Activated naive CD4-positive, alpha-beta T cell treated with anti-CD3 and anti-CD28 coated beads, Interleukin-2, amount 10 ng/mL, durations not matched to agents 7 days and 5 days (primary cell): ENCODE measurements at regions of chr7 and their contacts with region 1.

Region 1: DNA sequence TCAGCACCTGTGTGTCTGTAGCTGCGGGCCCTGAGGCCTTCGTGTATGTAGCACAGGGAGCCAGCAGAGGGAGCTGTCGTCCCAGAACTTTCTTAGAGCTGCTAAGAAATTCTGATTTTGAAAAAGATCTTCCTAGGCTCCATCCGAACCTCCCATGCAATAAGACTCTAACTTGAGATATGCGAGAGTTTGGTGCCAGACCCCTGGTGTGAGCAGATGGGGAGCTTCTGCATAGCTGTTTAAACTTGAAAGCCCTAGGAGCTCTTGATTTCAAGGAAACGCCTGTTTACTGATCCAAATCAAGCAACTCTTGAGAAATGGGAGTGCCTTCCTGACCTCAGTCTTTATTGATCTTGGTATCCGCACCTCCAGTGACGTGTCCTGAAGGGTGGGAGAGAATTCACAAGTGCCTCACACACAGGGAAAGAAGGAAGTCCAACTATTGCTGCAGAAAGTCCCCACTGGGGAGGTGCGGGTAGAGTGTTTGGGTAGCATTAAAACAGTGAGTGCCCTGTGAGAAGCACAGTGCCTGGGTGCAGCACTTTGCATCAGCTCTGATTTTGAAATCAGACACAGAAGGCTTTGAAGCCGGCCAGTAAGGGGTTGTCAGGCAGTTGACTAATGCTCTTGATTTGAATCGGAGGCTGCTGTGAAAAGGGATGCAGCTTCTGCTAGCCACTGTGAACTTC is 66.4 kb upstream of the STRIP2 start:
- DNase-seq: peak; percentile 87
- H3K4me3 Mint-ChIP-seq: peak overlapping the region; percentile 51
- H3K27ac Mint-ChIP-seq: peak overlapping the region; percentile 85
- H3K4me1 Mint-ChIP-seq: peaks cover 32% of the 10 kb centered on the region
- H3K27me3 Mint-ChIP-seq: no peaks in the 10 kb centered on the region

Region 2: GRCh38 chr7:129271500-129272355 is 96.1 kb before region 1 on chr7:
- CTCF ChIA-PET with region 1: no interaction called
- DNase-seq: peak; percentile 76
- H3K4me3 Mint-ChIP-seq: no peak overlapping the region
- H3K27ac Mint-ChIP-seq: no peak overlapping the region
- H3K4me1 Mint-ChIP-seq: peaks cover 2% of the 10 kb centered on the region
- H3K27me3 Mint-ChIP-seq: no peaks in the 10 kb centered on the region

Region 3: DNA sequence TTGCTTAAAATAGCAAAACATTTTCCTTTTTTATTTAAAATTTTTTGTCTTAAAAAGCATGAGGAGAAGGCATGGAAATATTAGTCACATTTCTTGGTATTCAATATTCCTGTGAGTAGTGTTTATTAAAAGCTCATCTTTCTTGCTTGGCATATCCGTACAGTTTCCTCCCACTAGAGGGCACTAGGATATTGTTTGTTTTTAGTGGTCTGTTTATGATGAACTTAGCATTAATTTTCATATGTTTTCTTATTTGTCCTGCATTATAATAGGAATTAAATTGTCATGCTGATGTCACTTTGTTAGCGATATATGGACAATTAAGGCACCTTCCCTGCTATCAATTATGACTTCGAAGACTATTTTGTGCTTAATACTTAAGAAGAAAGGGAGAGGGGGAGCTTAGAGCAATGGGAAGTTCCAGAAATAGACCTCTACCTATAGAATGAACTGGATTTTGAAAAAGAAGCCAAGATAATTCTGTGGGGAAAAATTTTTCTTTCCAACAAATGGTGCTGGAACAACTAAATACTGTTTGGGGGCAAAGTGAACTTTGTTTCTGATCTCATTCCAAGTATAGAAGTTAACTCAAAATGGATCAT is 24.6 kb before region 1 on chr7:
- CTCF ChIA-PET with region 1: interaction called, 80 read pairs
- DNase-seq: peak; percentile 23
- H3K4me3 Mint-ChIP-seq: no peak overlapping the region
- H3K27ac Mint-ChIP-seq: peak overlapping the region; percentile 65
- H3K4me1 Mint-ChIP-seq: peaks cover 42% of the 10 kb centered on the region
- H3K27me3 Mint-ChIP-seq: no peaks in the 10 kb centered on the region

Region 4: GRCh38 chr7:129401967-129402860 is 34.4 kb after region 1 on chr7:
- CTCF ChIA-PET with region 1: interaction called, 20 read pairs
- DNase-seq: peak; percentile 29
- H3K4me3 Mint-ChIP-seq: no peak overlapping the region
- H3K27ac Mint-ChIP-seq: no peak overlapping the region
- H3K4me1 Mint-ChIP-seq: peaks cover 12% of the 10 kb centered on the region
- H3K27me3 Mint-ChIP-seq: no peaks in the 10 kb centered on the region

Region 5: GRCh38 chr7:129468087-129468486 is 100.2 kb after region 1 on chr7:
- CTCF ChIA-PET with region 1: interaction called, 133 read pairs
- DNase-seq: no peak
- H3K4me3 Mint-ChIP-seq: no peak overlapping the region
- H3K27ac Mint-ChIP-seq: no peak overlapping the region
- H3K4me1 Mint-ChIP-seq: peaks cover 10% of the 10 kb centered on the region
- H3K27me3 Mint-ChIP-seq: no peaks in the 10 kb centered on the region